Endothelial cell of umbilical vein (primary cell): ENCODE measurements at regions of chr17 and their contacts with region 1.

Region 1: DNA sequence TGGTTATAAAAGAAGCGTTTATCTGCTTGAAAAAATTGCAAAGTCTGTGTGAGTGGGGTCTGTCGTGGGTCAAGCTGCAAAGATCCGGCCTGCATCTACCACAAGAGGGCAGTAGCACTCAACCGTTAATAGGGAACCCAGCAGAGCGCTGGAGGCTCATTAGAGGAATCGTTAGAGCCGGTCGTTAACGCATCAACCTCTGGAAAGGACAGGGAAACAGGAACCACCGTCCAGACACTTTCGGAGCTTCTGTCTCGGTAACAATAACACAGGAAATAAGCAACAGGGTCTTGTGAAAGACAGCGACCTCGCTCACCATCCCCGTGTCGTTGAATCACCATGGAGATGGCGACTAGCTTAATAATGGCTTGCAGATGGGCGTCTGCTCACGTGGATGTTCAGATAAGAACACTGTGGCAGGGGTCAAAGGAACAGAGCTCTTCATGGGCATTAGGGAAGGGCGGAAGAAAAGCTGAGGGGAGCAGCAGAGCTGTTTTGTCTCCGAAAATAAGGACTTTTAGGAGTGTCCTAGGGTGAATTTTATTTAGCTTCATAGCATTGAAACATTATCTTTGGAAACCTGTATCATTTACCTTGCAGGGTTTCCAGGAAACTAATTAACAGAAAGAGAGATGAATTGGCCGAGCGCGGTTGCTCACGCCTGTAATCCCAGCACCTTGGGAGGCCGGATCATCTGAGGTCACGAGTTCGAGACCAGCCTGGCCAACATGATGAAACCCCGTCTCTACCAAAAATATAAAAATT is 11.9 kb upstream of the NSRP1 start:
- DNase-seq: peak; percentile 85
- H3K4me3 ChIP-seq: peak overlapping the region in 2 of 3 experiments; percentile 24 to 57
- H3K27ac ChIP-seq: no peak overlapping the region
- H3K4me1 ChIP-seq: peaks cover 5% of the 10 kb centered on the region
- H3K27me3 ChIP-seq: no peaks in the 10 kb centered on the region
- CTCF ChIP-seq: peak; percentile 88 to 96
- POLR2A ChIP-seq: no peak

Region 2: GRCh38 chr17:30116661-30117551 is 12.1 kb after region 1 on chr17 and contains the start of gene NSRP1:
- CTCF ChIA-PET with region 1: interaction called, 36 read pairs
- POLR2A ChIA-PET with region 1: no interaction called
- dilution Hi-C with region 1: no loop called
- intact Hi-C with region 1: loop called (anchors 1 kb)
- DNase-seq: peak; percentile 97
- H3K4me3 ChIP-seq: peak within 1 kb of the TSS; percentile 61 to 92 (median 81)
- H3K27ac ChIP-seq: peak within 1 kb of the TSS; percentile 96
- H3K4me1 ChIP-seq: peaks cover 14% of the 10 kb centered on the region
- H3K27me3 ChIP-seq: no peaks in the 10 kb centered on the region
- CTCF ChIP-seq: no peak
- POLR2A ChIP-seq: peak; percentile 94
- total RNA-seq, gene NSRP1: 28.4 and 29.1 TPM in 2 replicates

Region 3: DNA sequence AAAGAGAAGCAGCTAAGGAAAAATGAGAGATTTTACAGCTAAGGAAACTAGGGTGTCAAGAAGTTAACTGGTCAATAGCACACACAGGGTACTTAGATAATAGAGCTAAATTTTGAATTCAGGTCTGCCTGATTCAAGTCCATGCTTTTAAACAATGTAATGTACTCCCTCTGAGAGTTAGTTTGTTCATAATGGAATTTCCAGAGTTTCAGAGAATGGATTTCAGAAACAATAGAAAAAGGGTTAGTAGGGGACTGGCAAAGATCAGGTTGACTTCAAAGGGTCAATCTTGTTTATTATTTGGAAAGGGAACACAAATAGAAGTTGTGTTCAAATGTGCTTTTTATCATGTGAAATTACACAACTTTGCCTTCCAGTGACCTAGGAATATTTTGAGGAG is 29.8 kb after region 1 on chr17:
- CTCF ChIA-PET with region 1: interaction called, 12 read pairs
- POLR2A ChIA-PET with region 1: no interaction called
- dilution Hi-C with region 1: no loop called
- intact Hi-C with region 1: no loop called
- DNase-seq: no peak
- H3K4me3 ChIP-seq: no peak overlapping the region
- H3K27ac ChIP-seq: no peak overlapping the region
- H3K4me1 ChIP-seq: no peaks in the 10 kb centered on the region
- H3K27me3 ChIP-seq: no peaks in the 10 kb centered on the region
- CTCF ChIP-seq: no peak
- POLR2A ChIP-seq: no peak

Region 4: DNA sequence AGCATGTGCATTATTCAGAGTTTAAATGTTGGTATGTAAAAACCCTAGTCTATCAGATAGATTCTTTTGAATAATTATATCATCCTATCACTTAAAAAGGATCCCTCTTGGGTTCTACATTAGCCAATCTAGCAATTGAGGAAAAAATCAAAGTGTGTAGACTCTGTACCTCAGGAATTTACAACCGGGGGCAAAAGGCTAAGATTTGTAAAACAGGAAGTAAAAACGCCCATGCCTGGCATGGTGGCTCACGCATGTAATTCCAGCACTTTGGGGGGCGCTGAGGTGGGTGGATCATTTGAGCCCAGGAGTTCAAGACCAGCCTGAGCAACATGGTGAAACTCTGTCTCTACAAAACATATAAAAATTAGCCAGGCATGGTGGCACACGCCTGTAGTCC is 72.1 kb after region 1 on chr17:
- CTCF ChIA-PET with region 1: no interaction called
- POLR2A ChIA-PET with region 1: no interaction called
- dilution Hi-C with region 1: no loop called
- intact Hi-C with region 1: no loop called
- DNase-seq: no peak
- H3K4me3 ChIP-seq: no peak overlapping the region
- H3K27ac ChIP-seq: no peak overlapping the region
- H3K4me1 ChIP-seq: no peaks in the 10 kb centered on the region
- H3K27me3 ChIP-seq: no peaks in the 10 kb centered on the region
- CTCF ChIP-seq: no peak
- POLR2A ChIP-seq: no peak

Region 5: GRCh38 chr17:30236766-30237165 is 132.0 kb after region 1 on chr17:
- CTCF ChIA-PET with region 1: interaction called, 43 read pairs
- POLR2A ChIA-PET with region 1: no interaction called
- dilution Hi-C with region 1: no loop called
- intact Hi-C with region 1: loop called (anchors 1 kb)
- DNase-seq: peak; percentile 44
- H3K4me3 ChIP-seq: no peak overlapping the region
- H3K27ac ChIP-seq: no peak overlapping the region
- H3K4me1 ChIP-seq: peaks cover 8% of the 10 kb centered on the region
- H3K27me3 ChIP-seq: peaks cover 51 to 54% of the 10 kb centered on the region in 2 experiments
- CTCF ChIP-seq: peak; percentile 26 to 65
- POLR2A ChIP-seq: no peak

Region 6: GRCh38 chr17:30336369-30337171 is 231.8 kb after region 1 on chr17:
- CTCF ChIA-PET with region 1: interaction called, 93 read pairs
- POLR2A ChIA-PET with region 1: no interaction called
- dilution Hi-C with region 1: no loop called
- intact Hi-C with region 1: loop called (anchors 1 kb)
- DNase-seq: peak; percentile 64
- H3K4me3 ChIP-seq: no peak overlapping the region
- H3K27ac ChIP-seq: no peak overlapping the region
- H3K4me1 ChIP-seq: peaks cover 18% of the 10 kb centered on the region
- H3K27me3 ChIP-seq: no peaks in the 10 kb centered on the region
- CTCF ChIP-seq: peak; percentile 42 to 56
- POLR2A ChIP-seq: no peak

Region 7: GRCh38 chr17:30477083-30477773 is 372.5 kb after region 1 on chr17 and contains the start of gene GOSR1:
- CTCF ChIA-PET with region 1: interaction called, 14 read pairs
- POLR2A ChIA-PET with region 1: no interaction called
- dilution Hi-C with region 1: no loop called
- intact Hi-C with region 1: no loop called
- DNase-seq: peak; percentile 97
- H3K4me3 ChIP-seq: peak within 1 kb of the TSS; percentile 57 to 100 (median 90)
- H3K27ac ChIP-seq: peak within 1 kb of the TSS; percentile 85
- H3K4me1 ChIP-seq: peaks cover 12% of the 10 kb centered on the region
- H3K27me3 ChIP-seq: peaks cover 0 to 4% of the 10 kb centered on the region in 2 experiments
- CTCF ChIP-seq: peak; percentile 78 to 93
- POLR2A ChIP-seq: peak; percentile 88
- total RNA-seq, gene GOSR1: 41.0 and 43.8 TPM in 2 replicates